Psoas muscle (tissue), 8 donors: ENCODE measurements at regions of chr1 and their contacts with region 1.

Region 1: DNA sequence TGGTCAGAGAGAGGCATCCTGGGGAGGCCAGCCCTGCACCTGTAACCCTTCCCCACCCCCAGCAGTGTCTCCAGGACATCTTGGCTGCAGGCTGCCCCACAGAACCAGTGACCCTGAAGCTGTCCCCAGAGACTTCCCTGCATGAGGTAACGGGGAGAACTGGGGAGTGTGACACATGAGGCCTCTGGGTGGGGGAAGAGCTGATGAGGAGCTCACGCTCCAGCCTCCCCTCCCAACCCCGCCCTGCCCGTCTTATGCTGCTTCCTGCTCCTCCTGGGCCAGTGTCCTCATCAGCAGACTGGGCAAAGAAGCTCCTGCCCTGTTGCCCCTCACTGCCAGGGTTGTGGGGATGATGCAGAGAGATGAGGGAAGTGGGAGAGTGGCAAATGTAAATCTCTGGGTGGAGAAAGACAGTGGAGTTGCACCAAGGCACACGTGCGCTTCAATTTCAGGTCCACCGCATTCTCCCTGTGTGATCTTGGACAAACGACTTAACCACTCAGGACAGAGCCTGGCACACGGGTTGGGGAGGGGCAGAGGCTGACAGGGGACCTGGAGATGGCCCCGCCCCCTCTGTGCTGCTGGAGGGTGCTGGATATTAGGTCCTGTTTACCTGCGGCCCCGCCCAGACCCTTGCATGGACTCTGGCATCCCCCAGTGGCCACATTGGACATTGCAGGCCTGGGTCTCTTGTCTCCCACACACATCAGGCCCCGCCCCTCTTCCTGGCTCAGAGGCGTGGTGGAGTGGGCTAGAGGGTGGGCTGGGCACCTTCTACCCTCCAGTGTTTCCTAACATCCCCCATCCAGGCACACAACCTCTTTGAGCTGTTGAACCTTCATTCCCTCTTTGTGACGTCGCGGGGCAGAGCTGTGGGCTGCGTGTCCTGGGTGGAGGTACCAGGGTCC is 12.3 kb downstream of the CLCNKB start:
- DNase-seq: peak; percentile 86 to 91
- ATAC-seq: peak; percentile 88 to 94 (median 92)
- H3K4me3 ChIP-seq: no peak overlapping the region
- H3K27ac ChIP-seq: no peak overlapping the region
- H3K4me1 ChIP-seq: no peaks in the 10 kb centered on the region
- H3K27me3 ChIP-seq: no peaks in the 10 kb centered on the region
- CTCF ChIP-seq: peak; percentile 95

Region 2: GRCh38 chr1:15799004-15799936 is 256.6 kb before region 1 on chr1:
- intact Hi-C with region 1: loop called in 1 of 2 experiments (anchors 5 kb)
- DNase-seq: peak; percentile 70 to 76
- ATAC-seq: peak; percentile 88 to 90 (median 88)
- H3K4me3 ChIP-seq: no peak overlapping the region
- H3K27ac ChIP-seq: peak overlapping the region; percentile 36
- H3K4me1 ChIP-seq: peaks cover 10% of the 10 kb centered on the region
- H3K27me3 ChIP-seq: no peaks in the 10 kb centered on the region
- CTCF ChIP-seq: no peak

Region 3: GRCh38 chr1:16009030-16009709 is 46.7 kb before region 1 on chr1:
- intact Hi-C with region 1: loop called (anchors 1 to 2 kb)
- DNase-seq: peak; percentile 82 to 91
- ATAC-seq: peak; percentile 17 to 39 (median 32)
- H3K4me3 ChIP-seq: no peak overlapping the region
- H3K27ac ChIP-seq: peak overlapping the region; percentile 9
- H3K4me1 ChIP-seq: peaks cover 17% of the 10 kb centered on the region
- H3K27me3 ChIP-seq: no peaks in the 10 kb centered on the region
- CTCF ChIP-seq: peak; percentile 98

Region 4: DNA sequence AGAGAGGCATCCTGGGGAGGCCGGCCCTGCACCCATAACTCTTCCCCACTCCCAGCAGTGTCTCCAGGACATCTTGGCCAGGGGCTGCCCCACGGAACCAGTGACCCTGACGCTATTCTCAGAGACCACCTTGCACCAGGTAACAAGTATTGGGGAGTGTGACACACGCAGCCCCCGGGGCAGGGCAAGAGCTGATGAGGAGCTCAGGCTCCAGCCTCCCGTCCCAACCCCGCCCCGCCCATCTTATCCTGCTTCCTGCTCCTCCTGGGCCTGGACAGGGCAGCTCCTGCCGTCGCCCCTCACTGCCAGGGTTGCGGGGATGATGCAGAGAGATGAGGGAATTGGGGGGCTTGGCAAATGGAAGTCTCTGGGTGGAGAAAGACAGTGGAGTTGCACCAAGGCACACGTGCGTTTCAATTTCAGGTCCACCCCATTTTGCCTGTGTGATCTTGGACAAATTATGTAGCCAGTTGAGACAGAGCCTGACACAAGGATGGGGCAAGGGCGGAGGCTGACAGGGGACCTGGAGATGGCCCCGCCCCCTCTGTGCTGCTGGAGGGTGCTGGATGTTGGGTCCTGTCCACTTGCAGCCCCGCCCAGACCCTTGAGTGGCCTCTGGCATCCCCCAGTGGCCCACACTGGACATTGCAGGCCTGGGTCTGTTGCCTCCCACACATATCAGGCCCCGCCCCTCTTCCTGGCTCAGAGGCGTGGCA is 23.3 kb before region 1 on chr1:
- intact Hi-C with region 1: loop called (anchors 2 kb)
- DNase-seq: peak; percentile 87 to 96
- ATAC-seq: peak; percentile 96 to 99 (median 98)
- H3K4me3 ChIP-seq: no peak overlapping the region
- H3K27ac ChIP-seq: no peak overlapping the region
- H3K4me1 ChIP-seq: no peaks in the 10 kb centered on the region
- H3K27me3 ChIP-seq: peaks cover 0 to 2% (median 0%) of the 10 kb centered on the region in 3 donors
- CTCF ChIP-seq: peak; percentile 99

Region 5: DNA sequence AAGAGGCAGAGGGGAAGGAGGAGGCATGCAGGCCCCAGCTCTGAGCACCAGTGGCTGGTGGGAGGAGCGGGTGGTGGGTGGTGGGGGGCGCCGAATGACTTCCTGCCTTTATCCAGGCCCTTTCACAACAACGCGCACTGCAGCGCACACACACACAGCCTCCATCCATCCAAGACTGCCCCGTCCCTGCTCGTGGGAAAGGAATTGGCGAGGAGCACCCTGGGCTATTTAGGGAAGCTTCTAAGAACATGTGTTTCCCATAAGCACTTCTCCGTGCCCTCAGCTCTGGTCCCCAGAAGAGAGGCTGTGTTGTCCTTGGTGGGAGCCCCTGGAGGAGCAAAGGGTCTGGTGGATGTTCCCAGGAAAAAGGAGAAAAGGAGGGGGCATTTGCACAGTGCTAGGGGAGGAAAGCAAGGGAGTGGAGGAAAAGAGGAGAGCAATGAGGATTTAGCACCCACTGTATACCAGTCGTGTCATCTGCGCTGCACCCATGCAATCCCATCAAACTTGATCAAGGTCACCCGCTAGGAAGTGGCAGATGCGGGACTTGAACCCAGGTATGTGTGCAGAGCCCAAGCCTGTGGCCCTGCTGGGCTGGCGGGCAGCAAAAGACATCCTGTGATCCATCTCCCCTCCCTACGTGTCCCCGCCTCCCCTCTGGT is 71.9 kb after region 1 on chr1:
- intact Hi-C with region 1: no loop called
- DNase-seq: no peak
- ATAC-seq: peak in 2 of 4 donors; percentile 15 to 42
- H3K4me3 ChIP-seq: no peak overlapping the region
- H3K27ac ChIP-seq: peak overlapping the region; percentile 50
- H3K4me1 ChIP-seq: no peaks in the 10 kb centered on the region
- H3K27me3 ChIP-seq: no peaks in the 10 kb centered on the region
- CTCF ChIP-seq: no peak